ENCODE measurements at regions of chr20 and their contacts with region 1.

Region 1: DNA sequence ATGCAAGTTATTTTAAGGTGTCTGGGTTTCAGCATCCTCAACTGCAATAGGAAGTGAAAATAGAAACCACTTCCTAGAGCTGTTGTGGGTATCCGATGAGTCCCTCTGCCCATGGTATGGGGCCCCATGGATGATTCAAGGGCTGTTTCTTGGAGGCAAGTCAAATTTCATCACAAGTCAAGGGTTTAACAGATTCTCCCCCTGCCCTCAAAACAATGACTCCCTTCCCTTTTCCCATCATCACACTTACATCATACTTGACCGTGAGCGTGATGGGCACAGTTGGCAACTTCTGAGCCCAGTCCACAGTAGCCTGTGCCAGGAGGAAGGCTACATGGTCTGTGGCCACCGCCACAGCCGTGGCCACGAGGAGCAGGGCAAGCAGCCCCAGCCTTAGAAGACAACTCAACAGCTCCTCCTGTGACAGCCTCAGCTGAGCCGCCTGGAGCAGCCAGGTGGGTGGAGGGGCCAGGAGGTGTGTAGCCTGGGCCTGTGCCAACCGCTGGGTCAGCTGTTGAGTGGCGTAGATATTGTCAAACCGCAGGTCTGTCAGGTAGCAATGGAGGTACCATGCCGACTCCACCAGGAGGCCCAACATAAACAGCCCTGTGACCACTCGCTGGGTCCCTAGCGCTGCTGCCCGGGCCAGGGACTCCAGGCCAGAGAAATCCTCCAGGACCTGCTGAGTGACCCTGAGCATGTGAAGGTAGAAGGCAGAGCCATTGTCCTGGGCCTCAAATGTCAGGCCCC is 5.2 kb downstream of the OCSTAMP start:
- DNase-seq: peak; percentile 77
- H3K4me3 Mint-ChIP-seq: peak overlapping the region; percentile 57
- H3K27ac Mint-ChIP-seq: no peak overlapping the region
- H3K4me1 Mint-ChIP-seq: peaks cover 17% of the 10 kb centered on the region
- H3K27me3 Mint-ChIP-seq: peaks cover 4% of the 10 kb centered on the region

Region 2: GRCh38 chr20:46367967-46368901 is 177.0 kb before region 1 on chr20:
- CTCF ChIA-PET with region 1: no interaction called
- POLR2A ChIA-PET with region 1: no interaction called
- DNase-seq: no peak
- H3K4me3 Mint-ChIP-seq: no peak overlapping the region
- H3K27ac Mint-ChIP-seq: peak overlapping the region; percentile 54
- H3K4me1 Mint-ChIP-seq: peaks cover 44% of the 10 kb centered on the region
- H3K27me3 Mint-ChIP-seq: no peaks in the 10 kb centered on the region

Region 3: DNA sequence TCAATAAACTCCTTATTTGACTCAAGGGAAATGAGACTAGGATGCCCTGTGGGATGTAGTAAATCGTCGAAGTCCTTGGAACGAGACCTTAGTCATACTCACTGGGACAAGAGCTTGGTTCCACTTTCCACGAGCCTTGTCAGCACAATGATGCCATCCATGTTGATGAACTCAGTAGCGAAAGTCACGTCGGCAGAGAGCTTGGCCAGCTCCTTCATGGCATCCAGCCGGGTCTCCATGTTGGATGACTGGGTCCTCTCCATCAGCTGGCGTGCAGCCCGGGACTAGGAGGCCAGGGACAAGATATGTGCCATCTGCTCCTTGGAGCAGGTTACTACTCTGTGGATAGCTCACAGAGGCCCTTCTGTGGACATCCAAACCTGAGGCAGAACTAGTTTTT is 156.3 kb before region 1 on chr20:
- CTCF ChIA-PET with region 1: no interaction called
- POLR2A ChIA-PET with region 1: no interaction called
- DNase-seq: no peak
- H3K4me3 Mint-ChIP-seq: no peak overlapping the region
- H3K27ac Mint-ChIP-seq: no peak overlapping the region
- H3K4me1 Mint-ChIP-seq: no peaks in the 10 kb centered on the region
- H3K27me3 Mint-ChIP-seq: no peaks in the 10 kb centered on the region

Region 4: GRCh38 chr20:46400253-46400652 is 145.0 kb before region 1 on chr20:
- CTCF ChIA-PET with region 1: no interaction called
- POLR2A ChIA-PET with region 1: no interaction called
- DNase-seq: no peak
- H3K4me3 Mint-ChIP-seq: peak overlapping the region; percentile 69
- H3K27ac Mint-ChIP-seq: peak overlapping the region; percentile 96
- H3K4me1 Mint-ChIP-seq: peaks cover 73% of the 10 kb centered on the region
- H3K27me3 Mint-ChIP-seq: no peaks in the 10 kb centered on the region

Region 5: DNA sequence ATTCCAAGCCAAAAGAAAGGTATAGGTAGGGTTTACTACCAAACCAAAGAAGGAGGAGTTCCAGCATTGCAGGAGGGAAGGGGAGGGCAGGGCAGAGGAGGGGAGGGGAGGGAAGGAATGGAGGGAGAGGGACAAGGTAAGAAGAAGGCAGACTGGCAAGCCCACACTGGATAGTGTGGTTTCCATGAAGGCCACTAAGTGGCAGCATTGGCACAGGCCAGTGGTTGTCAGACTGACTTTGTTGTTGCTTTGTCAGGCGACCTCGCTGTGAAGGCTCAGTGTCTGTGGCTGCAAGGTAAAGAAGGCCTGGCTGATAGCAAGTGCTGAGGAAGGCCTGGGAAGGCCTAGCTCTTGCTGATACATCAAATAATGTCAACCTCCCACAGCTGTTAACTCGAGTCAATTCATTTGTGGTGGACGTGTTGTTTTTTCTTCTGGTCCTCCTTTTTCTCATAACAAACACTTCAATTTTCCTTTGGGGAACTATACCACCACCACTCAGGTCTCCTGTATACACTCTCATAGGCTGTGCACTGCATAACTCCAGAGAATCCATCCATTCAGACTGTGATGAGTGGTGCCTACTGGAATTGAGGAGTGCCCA is 24.2 kb before region 1 on chr20:
- CTCF ChIA-PET with region 1: interaction called, 12 read pairs
- POLR2A ChIA-PET with region 1: interaction called, 5 read pairs
- DNase-seq: peak; percentile 72
- H3K4me3 Mint-ChIP-seq: no peak overlapping the region
- H3K27ac Mint-ChIP-seq: no peak overlapping the region
- H3K4me1 Mint-ChIP-seq: peaks cover 4% of the 10 kb centered on the region
- H3K27me3 Mint-ChIP-seq: peaks cover 32% of the 10 kb centered on the region

Region 6: DNA sequence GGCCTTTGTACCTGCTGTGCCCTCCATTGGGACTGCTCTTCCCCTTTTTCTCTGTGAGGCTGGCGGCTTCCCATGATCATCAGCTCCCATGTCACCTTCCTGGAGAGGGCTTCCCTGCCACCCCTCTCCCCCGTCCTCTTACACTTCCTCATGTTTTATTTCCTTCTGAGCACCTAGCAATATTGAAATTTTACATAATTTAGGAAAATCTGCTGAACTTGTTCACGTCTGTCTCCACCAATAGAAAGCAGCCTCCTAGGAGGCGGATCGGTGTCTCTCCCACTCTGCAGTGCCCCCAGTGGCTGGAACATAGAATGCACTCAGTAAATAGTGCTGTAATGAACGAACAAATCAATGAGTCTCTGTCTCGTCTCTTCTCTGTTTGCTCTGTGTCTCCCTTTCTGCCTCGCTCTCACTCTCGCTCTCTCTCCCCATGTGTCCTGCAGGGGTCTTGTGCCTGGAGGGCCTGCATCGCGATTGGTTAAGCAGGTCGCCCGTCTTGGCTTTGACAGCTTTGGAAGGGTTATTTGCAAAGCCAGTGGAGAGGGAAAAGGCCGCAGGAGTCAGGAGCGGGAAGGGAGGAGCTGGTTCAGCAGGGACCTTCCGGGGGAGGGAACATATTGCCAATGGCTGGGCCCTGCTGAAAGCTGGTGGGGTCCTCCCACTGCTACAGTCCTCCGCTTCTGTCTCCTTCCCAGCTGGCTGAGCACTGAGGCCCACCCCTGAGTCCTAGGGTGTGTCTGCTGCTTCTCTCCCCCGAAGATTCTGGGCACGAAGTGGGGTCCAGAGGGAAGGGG is 17.3 kb after region 1 on chr20:
- CTCF ChIA-PET with region 1: interaction called, 20 read pairs
- POLR2A ChIA-PET with region 1: interaction called, 4 read pairs
- DNase-seq: peak; percentile 74
- H3K4me3 Mint-ChIP-seq: no peak overlapping the region
- H3K27ac Mint-ChIP-seq: no peak overlapping the region
- H3K4me1 Mint-ChIP-seq: peaks cover 35% of the 10 kb centered on the region
- H3K27me3 Mint-ChIP-seq: peaks cover 11% of the 10 kb centered on the region

Region 7: GRCh38 chr20:46681032-46681854 is 136.0 kb after region 1 on chr20:
- CTCF ChIA-PET with region 1: interaction called, 50 read pairs
- POLR2A ChIA-PET with region 1: interaction called, 8 read pairs
- DNase-seq: peak; percentile 74
- H3K4me3 Mint-ChIP-seq: no peak overlapping the region
- H3K27ac Mint-ChIP-seq: no peak overlapping the region
- H3K4me1 Mint-ChIP-seq: peaks cover 26% of the 10 kb centered on the region
- H3K27me3 Mint-ChIP-seq: no peaks in the 10 kb centered on the region

Region 8: DNA sequence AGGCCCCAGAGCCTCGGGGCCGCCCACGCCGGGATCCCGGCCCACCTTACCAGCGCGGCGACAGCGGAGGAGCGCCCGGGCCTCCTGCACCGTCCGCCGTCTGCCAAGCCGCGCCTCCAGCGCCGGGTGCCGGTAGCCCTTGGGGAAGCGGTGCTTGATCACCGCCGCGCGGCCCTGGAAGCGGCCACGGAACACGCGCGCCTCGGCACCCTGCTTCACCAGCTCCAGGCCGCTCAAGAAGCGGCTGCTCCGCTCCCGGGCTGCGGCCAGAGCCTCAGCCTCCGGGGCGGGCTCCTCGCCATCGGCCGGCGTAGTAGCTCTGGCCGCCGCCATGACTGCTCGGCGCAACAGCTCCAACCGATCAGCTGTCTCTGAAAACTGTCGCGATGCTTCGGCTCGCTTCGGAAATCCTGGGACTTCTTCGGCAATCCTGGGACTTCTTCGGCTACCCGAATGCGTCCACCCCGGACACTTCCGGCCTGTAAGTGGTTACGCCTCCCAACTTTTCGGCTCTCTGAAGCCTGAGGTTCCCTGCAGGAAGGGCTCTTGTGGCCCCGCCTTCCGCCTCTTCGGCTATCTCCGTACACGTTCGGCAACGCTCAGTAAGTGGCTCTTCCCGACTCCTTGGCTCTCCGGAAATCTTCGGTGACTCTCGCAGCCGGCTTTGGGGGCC is 144.0 kb after region 1 on chr20 and contains the start of gene TP53RK:
- CTCF ChIA-PET with region 1: interaction called, 50 read pairs
- POLR2A ChIA-PET with region 1: interaction called, 18 read pairs
- DNase-seq: peak; percentile 97
- H3K4me3 Mint-ChIP-seq: peak within 1 kb of the TSS; percentile 91
- H3K27ac Mint-ChIP-seq: peak within 1 kb of the TSS; percentile 86
- H3K4me1 Mint-ChIP-seq: peaks cover 44% of the 10 kb centered on the region
- H3K27me3 Mint-ChIP-seq: no peaks in the 10 kb centered on the region
- total RNA-seq, gene TP53RK: 18.3 to 18.8 TPM

Measured in activated CD4-positive, alpha-beta memory T cell treated with anti-CD3 and anti-CD28 coated beads, Interleukin-2, amount 10 ng/mL, durations not matched to agents 7 days and 5 days (primary cell).